Activated CD4-positive, alpha-beta T cell treated with anti-CD3 and anti-CD28 coated beads, Interleukin-2, amount 10 ng/mL, durations not matched to agents 7 days and 5 days (primary cell): ENCODE measurements at regions of chr12 and their contacts with region 1.

Region 1: DNA sequence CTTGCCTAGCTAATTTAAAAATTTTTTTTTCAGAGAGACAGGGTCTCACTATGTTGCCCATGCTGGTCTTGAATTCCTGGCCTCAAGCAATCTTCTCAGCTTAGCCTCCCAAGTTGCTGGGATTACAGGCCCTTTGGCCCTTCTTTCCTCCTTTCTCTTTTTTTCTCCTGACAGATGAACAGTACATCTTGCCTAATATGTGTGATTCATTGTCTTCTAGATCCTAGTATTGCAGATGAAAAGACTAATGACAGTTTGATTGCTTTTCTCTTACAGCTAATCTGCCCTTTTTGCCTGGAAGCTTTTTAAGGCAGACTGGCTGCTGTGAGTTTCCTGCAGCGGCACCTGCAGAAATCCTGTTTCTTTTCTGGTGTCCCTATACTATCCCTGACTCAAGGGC is 12.0 kb downstream of the DEPDC4 start:
- DNase-seq: no peak
- H3K4me3 Mint-ChIP-seq: no peak overlapping the region
- H3K27ac Mint-ChIP-seq: no peak overlapping the region
- H3K4me1 Mint-ChIP-seq: peaks cover 12% of the 10 kb centered on the region
- H3K27me3 Mint-ChIP-seq: no peaks in the 10 kb centered on the region

Region 2: DNA sequence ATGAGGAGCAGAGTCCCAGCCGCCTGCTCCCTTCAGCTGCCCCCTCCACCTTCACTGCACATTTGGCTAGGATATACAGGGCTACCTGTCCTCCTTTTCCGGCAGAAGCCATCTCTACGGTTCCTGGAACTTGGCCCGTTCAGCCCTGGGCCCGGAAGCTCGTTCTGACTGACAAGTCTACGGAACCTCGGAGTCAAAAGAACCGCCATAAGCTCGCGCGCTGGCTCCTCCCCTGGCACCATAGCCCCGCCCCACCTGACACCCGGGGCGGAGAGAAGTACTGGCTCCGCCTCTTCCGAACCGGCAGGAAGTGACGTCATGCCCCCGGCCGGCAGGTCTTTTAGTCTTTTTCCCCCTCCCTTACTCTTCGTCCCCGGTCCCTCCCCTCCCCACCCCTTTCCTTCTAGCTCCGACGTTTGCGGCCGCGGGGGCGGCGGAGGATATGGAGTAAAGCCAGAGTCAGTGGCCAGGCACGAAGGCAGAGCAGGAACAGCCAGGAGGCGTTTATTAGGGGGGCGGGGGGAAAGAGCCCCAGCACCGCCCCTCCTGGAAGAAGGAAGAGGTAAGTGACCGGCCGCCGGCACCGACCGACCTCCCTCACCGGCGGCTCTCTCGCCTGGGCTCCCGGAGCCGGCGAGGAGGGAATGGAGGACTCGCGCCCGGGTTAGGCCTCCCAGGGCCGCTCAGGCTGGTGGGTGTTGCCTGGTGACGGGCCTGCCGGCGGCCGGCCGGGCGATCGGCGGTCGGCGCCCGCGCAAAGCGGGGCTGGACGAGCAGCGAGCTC is 12.2 kb after region 1 on chr12 and contains the starts of genes DEPDC4 and SCYL2:
- CTCF ChIA-PET with region 1: interaction called, 12 read pairs
- POLR2A ChIA-PET with region 1: no interaction called
- DNase-seq: peak; percentile 92
- H3K4me3 Mint-ChIP-seq: peak within 1 kb of the TSS; percentile 90
- H3K27ac Mint-ChIP-seq: peak within 1 kb of the TSS; percentile 96
- H3K4me1 Mint-ChIP-seq: peaks cover 29% of the 10 kb centered on the region
- H3K27me3 Mint-ChIP-seq: no peaks in the 10 kb centered on the region
- total RNA-seq, gene DEPDC4: 1.4 to 2.1 TPM
- total RNA-seq, gene SCYL2: 32.1 to 33.3 TPM

Region 3: DNA sequence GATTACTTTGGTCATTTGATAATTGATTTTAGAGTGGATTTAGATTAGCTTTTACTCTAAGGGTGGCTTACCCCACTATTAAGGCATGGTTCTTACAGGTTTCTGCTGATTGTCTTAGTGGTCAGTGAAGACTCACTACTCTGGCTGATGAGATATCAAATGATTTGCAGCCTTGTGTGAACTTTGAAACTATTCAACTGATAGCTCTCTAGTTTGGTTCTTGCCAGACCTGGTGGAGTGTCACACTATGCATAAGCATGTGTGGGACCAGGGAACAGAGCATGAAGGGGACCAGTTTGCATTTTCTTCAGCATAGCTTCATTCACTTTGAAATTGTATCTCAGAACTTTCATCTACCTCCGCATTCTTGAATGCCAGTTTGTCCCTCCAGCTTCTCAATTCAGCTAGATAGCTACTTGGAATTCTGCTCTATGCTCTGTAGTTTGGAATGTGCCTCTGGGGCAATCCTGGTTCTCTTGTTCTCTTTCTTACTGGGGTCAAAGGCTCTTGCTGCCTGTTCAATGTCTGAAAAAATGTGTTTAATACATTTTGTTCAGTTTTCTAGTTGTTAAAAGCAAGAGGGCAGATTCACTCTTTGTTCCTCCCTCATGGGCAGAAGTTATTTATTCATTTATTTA is 24.9 kb after region 1 on chr12:
- CTCF ChIA-PET with region 1: no interaction called
- POLR2A ChIA-PET with region 1: no interaction called
- DNase-seq: no peak
- H3K4me3 Mint-ChIP-seq: no peak overlapping the region
- H3K27ac Mint-ChIP-seq: no peak overlapping the region
- H3K4me1 Mint-ChIP-seq: peaks cover 8% of the 10 kb centered on the region
- H3K27me3 Mint-ChIP-seq: no peaks in the 10 kb centered on the region